Ascending aorta (tissue), 2 donors: ENCODE measurements at regions of chr10 and their contacts with region 1.

Region 1: GRCh38 chr10:119644205-119644814 is 6.9 kb upstream of the BAG3 start:
- DNase-seq: no peak
- H3K4me3 ChIP-seq: no peak overlapping the region
- H3K27ac ChIP-seq: no peak overlapping the region
- H3K4me1 ChIP-seq: no peaks in the 10 kb centered on the region
- H3K27me3 ChIP-seq: no peaks in the 10 kb centered on the region
- CTCF ChIP-seq: no peak

Region 2: GRCh38 chr10:119608316-119609155 is 35.8 kb before region 1 on chr10:
- intact Hi-C with region 1: no loop called
- DNase-seq: peak in 1 of 2 donors; percentile 67
- H3K4me3 ChIP-seq: peak overlapping the region in 1 of 2 donors; percentile 42
- H3K27ac ChIP-seq: no peak overlapping the region
- H3K4me1 ChIP-seq: no peaks in the 10 kb centered on the region
- H3K27me3 ChIP-seq: no peaks in the 10 kb centered on the region
- CTCF ChIP-seq: peak; percentile 43 to 77 (median 58)

Region 3: DNA sequence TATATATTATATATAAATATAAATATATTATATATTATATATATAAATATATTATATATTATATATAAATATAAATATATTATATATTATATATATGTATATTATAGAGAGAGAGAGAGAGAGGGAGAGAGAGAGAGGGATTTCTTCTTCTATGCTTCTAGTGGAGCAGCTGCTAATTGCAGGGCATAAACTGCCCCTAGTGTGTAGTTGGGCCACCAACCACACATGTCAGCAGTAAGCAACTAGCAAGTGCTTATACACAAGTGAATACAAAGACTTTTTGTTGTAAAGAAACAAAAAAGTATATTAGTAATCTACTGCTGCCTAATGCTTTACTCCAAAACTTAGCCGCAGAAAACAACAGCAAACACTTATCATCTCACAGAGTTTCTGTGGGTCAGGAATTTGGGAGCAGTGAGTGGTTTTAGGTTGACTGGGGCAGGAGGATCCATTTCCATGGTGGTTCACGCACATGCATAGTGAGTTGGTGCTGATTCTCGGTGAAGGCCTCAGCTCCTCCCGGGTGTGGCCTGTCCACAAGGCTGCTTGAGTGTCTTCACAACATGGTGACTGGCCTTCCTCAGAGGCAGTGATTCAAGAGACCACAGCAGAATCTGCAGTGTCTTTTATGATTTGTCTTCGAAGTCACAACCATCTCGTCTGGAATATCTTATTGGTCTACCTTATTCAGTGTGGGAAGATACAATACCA is 18.6 kb before region 1 on chr10:
- intact Hi-C with region 1: loop called (anchors 2 kb)
- DNase-seq: no peak
- H3K4me3 ChIP-seq: no peak overlapping the region
- H3K27ac ChIP-seq: no peak overlapping the region
- H3K4me1 ChIP-seq: no peaks in the 10 kb centered on the region
- H3K27me3 ChIP-seq: no peaks in the 10 kb centered on the region
- CTCF ChIP-seq: no peak

Region 4: DNA sequence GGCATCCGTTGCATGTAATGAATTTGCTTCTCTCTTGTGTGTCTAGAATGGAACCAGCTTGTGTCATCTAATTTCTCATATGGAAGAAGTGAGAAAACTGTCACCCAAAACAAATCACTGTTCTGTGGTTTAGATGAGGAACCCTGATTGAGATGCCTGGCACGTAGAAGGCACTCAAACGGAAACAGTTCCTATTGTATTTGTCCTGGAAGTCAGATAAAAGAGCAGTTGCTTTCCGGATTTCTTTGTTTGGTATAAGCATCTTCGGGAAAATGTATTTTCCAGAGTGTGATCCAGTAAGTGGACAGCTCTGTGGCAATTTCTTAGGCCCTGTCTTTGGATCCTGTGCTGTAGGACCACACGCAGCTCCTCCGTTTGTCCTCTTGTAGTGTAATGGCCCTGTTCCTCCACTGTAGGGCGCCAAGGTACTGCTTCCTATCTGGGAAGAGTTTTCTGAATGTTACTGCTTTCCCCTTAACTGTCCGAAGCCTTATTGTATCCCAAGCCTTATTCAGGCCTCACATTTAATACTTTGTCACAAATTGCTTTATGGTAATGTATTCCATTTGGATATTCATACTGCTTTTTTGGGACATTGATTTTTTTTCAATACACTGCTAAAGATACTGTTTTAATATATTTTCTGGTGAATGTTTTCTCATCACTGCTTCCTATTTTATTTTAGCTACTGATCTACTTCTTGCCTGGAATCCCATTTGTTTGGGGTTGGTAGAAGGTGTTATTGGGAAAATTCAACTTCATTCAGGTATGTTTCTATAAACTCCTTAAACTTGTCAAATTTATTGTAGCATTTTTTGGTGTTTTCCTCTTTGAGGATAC is 106.3 kb after region 1 on chr10:
- intact Hi-C with region 1: no loop called
- DNase-seq: peak in 1 of 2 donors; percentile 87
- H3K4me3 ChIP-seq: no peak overlapping the region
- H3K27ac ChIP-seq: no peak overlapping the region
- H3K4me1 ChIP-seq: peaks cover 0 to under 1% of the 10 kb centered on the region in 2 donors
- H3K27me3 ChIP-seq: no peaks in the 10 kb centered on the region
- CTCF ChIP-seq: peak; percentile 87 to 93 (median 92)